Common myeloid progenitor, CD34-positive (primary cell): ENCODE measurements at regions of chr12 and their contacts with region 1.

Region 1: GRCh38 chr12:93380480-93381121 is 2.9 kb downstream of the NUDT4 start:
- DNase-seq: peak; percentile 41 to 51 (median 47)
- H3K4me3 ChIP-seq: peak overlapping the region in 6 of 7 experiments; percentile 36 to 98 (median 66)
- H3K27ac ChIP-seq: peak overlapping the region in 1 of 2 experiments; percentile 91
- H3K4me1 ChIP-seq: peaks cover 25 to 46% (median 32%) of the 10 kb centered on the region in 4 experiments
- H3K27me3 ChIP-seq: no peaks in the 10 kb centered on the region

Region 2: GRCh38 chr12:92987362-92987761 is 393.2 kb before region 1 on chr12:
- CTCF ChIA-PET with region 1: interaction called, 37 read pairs
- POLR2A ChIA-PET with region 1: interaction called, 3 read pairs
- DNase-seq: peak; percentile 68 to 84 (median 83)
- H3K4me3 ChIP-seq: peak overlapping the region in 1 of 7 experiments; percentile 21
- H3K27ac ChIP-seq: no peak overlapping the region
- H3K4me1 ChIP-seq: peaks cover 5 to 8% (median 6%) of the 10 kb centered on the region in 4 experiments
- H3K27me3 ChIP-seq: no peaks in the 10 kb centered on the region

Region 3: GRCh38 chr12:93098077-93098476 is 282.5 kb before region 1 on chr12:
- CTCF ChIA-PET with region 1: interaction called, 11 read pairs
- POLR2A ChIA-PET with region 1: no interaction called
- DNase-seq: peak; percentile 90 to 95 (median 94)
- H3K4me3 ChIP-seq: no peak overlapping the region
- H3K27ac ChIP-seq: no peak overlapping the region
- H3K4me1 ChIP-seq: peaks cover 0 to 8% (median 4%) of the 10 kb centered on the region in 4 experiments
- H3K27me3 ChIP-seq: no peaks in the 10 kb centered on the region

Region 4: GRCh38 chr12:93390549-93391297 is 10.1 kb after region 1 on chr12:
- CTCF ChIA-PET with region 1: interaction called, 38 read pairs
- POLR2A ChIA-PET with region 1: no interaction called
- DNase-seq: no peak
- H3K4me3 ChIP-seq: no peak overlapping the region
- H3K27ac ChIP-seq: no peak overlapping the region
- H3K4me1 ChIP-seq: no peaks in the 10 kb centered on the region
- H3K27me3 ChIP-seq: no peaks in the 10 kb centered on the region

Region 5: GRCh38 chr12:93403988-93404803 is 23.6 kb after region 1 on chr12:
- CTCF ChIA-PET with region 1: no interaction called
- POLR2A ChIA-PET with region 1: no interaction called
- DNase-seq: no peak
- H3K4me3 ChIP-seq: no peak overlapping the region
- H3K27ac ChIP-seq: no peak overlapping the region
- H3K4me1 ChIP-seq: no peaks in the 10 kb centered on the region
- H3K27me3 ChIP-seq: no peaks in the 10 kb centered on the region